ENCODE measurements at regions of chr4 and their contacts with region 1.

Region 1: GRCh38 chr4:16001484-16001858 is 38.5 kb upstream of the FGFBP2 start:
- DNase-seq: peak; percentile 24
- ATAC-seq: peak; percentile 88
- H3K4me3 Mint-ChIP-seq: no peak overlapping the region
- H3K27ac Mint-ChIP-seq: no peak overlapping the region
- H3K4me1 Mint-ChIP-seq: no peaks in the 10 kb centered on the region
- H3K27me3 Mint-ChIP-seq: no peaks in the 10 kb centered on the region
- CTCF ChIP-seq: no peak

Region 2: DNA sequence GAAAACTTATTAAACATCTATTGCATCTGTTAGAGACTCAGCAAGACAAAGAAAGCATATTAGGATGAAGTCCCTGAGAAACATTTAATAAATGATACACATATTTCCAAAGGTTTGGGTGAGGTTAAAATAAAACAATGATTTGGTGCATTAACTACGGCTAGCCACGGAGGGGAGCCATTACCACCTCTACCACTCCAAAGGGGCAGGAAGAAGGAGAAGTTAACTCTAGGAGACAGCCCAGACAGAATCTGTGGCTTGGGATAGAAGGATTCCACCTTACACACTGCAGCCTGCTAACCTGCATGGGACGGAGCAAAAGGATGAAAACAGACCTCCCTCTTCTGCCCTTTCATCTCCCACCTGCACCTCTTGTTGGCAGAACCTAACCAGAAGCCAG is 762.8 kb before region 1 on chr4:
- CTCF ChIA-PET with region 1: no interaction called
- POLR2A ChIA-PET with region 1: no interaction called
- intact Hi-C with region 1: loop called (anchors 2 kb)
- DNase-seq: no peak
- ATAC-seq: peak; percentile 58
- H3K4me3 Mint-ChIP-seq: no peak overlapping the region
- H3K27ac Mint-ChIP-seq: no peak overlapping the region
- H3K4me1 Mint-ChIP-seq: peaks cover 8% of the 10 kb centered on the region
- H3K27me3 Mint-ChIP-seq: peaks cover 2% of the 10 kb centered on the region
- CTCF ChIP-seq: no peak

Region 3: GRCh38 chr4:15906024-15906443 is 95.4 kb before region 1 on chr4:
- CTCF ChIA-PET with region 1: no interaction called
- POLR2A ChIA-PET with region 1: no interaction called
- intact Hi-C with region 1: no loop called
- DNase-seq: no peak
- ATAC-seq: peak; percentile 68
- H3K4me3 Mint-ChIP-seq: no peak overlapping the region
- H3K27ac Mint-ChIP-seq: no peak overlapping the region
- H3K4me1 Mint-ChIP-seq: no peaks in the 10 kb centered on the region
- H3K27me3 Mint-ChIP-seq: peaks cover 9% of the 10 kb centered on the region
- CTCF ChIP-seq: no peak

Region 4: DNA sequence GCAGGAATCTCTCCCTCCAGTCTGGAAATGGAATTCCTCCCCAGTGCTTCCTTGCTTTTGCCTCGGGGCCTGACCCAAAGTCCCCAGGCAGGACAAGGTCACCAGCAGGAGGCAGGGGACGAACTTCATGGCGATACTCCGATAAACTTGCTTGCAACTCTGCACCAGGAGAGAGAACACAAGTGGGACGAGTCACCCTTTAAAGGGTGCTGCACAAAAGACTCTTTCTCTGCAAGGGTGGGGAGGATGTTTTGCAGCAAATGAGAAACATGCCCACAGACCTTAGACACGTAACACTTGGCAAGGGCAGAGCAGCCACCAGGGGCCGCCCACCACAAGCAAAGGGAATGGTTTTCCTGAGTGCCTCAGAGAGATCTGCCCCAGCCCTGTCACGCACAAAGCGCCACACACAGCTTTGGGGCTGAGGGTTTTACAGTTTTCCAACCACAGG is 38.4 kb before region 1 on chr4 and contains the start of gene FGFBP2:
- CTCF ChIA-PET with region 1: interaction called, 7 read pairs
- POLR2A ChIA-PET with region 1: no interaction called
- intact Hi-C with region 1: loop called (anchors 1 kb)
- DNase-seq: no peak
- ATAC-seq: peak; percentile 52
- H3K4me3 Mint-ChIP-seq: no peak within 1 kb of the TSS
- H3K27ac Mint-ChIP-seq: no peak within 1 kb of the TSS
- H3K4me1 Mint-ChIP-seq: peaks cover 9% of the 10 kb centered on the region
- H3K27me3 Mint-ChIP-seq: peaks cover 5% of the 10 kb centered on the region
- CTCF ChIP-seq: no peak
- total RNA-seq, gene FGFBP2: 0.20 and 0.39 TPM in 2 replicates

Region 5: DNA sequence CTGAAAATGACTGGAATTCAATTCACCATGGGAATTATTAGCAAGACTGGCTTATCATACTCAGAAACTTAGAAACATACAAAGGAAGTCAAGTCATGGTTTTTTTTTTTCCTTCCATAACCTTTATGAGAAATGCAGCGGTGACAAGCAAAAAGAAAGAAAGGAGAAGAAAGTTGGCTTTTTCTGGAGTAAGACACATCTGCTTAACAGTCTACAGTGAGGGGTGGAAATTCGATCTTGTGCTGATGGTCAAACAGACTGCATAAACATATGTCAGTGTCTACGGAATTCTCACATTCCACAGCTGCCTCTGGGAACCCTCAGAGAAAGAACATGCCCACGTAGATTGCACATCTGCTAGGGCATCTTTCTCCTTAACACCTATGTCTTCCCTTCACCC is 27.8 kb after region 1 on chr4:
- CTCF ChIA-PET with region 1: no interaction called
- POLR2A ChIA-PET with region 1: no interaction called
- intact Hi-C with region 1: no loop called
- DNase-seq: no peak
- ATAC-seq: no peak
- H3K4me3 Mint-ChIP-seq: no peak overlapping the region
- H3K27ac Mint-ChIP-seq: no peak overlapping the region
- H3K4me1 Mint-ChIP-seq: no peaks in the 10 kb centered on the region
- H3K27me3 Mint-ChIP-seq: peaks cover 6% of the 10 kb centered on the region
- CTCF ChIP-seq: no peak

Measured in activated B cell treated with CpG ODN at 0.5 μM for 24 hours (primary cell).